Heart left ventricle (tissue), 16 donors: ENCODE measurements at regions of chr12 and their contacts with region 1.

Region 1: DNA sequence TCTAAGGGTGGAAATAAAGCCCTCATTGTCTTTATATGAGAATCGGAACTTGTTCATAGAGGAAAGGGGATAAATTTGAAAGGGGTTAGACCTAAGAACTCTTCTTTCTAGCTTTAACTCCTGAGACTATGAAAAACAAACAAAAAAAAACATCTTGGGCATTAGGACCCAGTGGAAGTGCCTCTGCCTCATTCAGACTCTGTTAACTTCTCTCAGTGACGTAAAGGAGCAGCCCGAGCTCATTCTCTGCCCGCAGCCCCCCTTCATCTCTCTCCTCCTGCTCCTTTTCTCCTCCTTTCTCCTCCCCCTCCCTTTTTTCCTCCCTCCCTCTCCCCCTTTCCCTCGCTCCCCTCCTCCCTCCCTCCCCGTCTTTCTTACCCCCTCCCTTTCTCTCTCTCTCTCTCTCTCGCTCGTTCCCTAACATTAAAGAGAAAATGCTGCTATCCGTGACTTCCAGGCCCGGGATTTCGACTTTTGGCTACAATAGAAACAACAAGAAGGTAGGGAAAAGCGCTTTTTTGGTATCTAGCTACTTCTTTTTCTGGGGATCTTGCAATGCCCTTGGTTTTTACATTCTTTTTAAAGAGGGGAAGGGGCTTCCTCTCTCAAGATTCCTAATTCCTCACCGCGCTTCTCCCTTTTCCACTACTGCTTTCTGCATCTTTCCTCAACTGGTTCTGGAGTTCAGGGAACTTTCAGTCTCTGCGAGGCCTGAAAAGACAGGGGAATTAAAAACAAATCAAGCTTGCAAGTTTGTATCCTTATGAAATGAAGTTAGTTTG is at the start of gene RBMS2:
- DNase-seq: peak; percentile 71 to 88 (median 87)
- ATAC-seq: peak; percentile 93 to 98 (median 95)
- H3K4me3 ChIP-seq: peak within 1 kb of the TSS; percentile 31 to 83 (median 67)
- H3K27ac ChIP-seq: peak within 1 kb of the TSS; percentile 85 to 97 (median 92)
- H3K4me1 ChIP-seq: peaks cover 0 to 73% (median 41%) of the 10 kb centered on the region in 12 donors
- H3K27me3 ChIP-seq: no peaks in the 10 kb centered on the region
- CTCF ChIP-seq: no peak
- POLR2A ChIP-seq: peak in 1 of 2 donors; percentile 33
- total RNA-seq, gene RBMS2: 15.8 to 37.3 (median 30.1) TPM

Region 2: DNA sequence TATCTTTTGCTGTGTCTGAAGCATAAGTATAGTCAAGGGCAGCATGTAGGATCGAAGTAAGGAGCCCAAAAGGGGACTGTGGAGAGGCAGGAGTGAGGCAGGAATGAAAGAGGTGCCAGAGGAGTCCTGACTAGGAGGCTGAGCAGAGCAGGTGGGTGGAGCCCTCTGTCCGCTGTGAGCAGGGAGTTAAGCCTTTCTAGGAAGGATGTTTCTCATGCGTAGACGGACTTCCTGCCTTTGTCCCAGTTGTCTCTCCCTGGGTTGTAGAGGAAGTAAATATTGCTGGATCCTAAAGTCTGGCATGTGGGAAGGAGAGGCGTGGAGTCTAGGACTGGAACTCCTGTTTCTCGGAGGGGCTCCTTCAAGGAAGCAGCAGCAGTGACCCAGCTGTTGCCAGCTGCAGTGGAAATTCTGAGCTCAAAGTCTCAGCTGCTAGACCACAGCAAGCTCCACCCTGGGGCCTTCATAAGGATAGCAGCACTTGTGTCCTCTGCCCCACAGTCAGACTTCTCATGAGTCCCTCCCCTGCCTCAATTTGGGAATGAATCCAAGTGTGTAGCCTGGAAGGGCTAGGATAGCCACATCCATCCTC is 43.8 kb after region 1 on chr12:
- intact Hi-C with region 1: loop called in 5 of 10 experiments (anchors 1 to 5 kb)
- DNase-seq: peak; percentile 80 to 91 (median 91)
- ATAC-seq: peak; percentile 91 to 97 (median 95)
- H3K4me3 ChIP-seq: peak overlapping the region in 4 of 12 donors; percentile 4 to 21 (median 9)
- H3K27ac ChIP-seq: peak overlapping the region; percentile 49 to 93 (median 84)
- H3K4me1 ChIP-seq: peaks cover 4 to 59% (median 38%) of the 10 kb centered on the region in 12 donors
- H3K27me3 ChIP-seq: no peaks in the 10 kb centered on the region
- CTCF ChIP-seq: peak in 6 of 12 donors; percentile 9 to 31 (median 18)
- POLR2A ChIP-seq: peak in 1 of 2 donors; percentile 39

Region 3: DNA sequence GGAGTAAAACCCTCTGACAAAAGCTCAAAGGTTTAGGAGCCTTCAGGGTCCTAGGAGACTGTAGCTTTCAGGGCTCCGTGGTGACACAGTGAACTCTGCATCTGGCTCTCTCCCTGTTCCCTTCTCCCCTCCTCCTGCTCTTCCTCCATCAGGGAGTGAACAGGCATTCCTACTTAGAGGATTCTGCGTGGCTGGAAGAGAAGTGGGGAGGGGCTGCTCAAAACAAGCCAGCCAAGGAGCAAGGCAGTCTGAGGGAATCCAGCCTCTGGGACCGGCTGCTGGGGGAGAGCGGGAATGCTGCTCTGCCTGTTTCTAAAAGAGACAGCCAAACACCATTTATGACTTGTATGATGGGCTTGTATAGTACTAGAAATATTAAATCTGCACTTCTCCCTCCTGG is 49.3 kb after region 1 on chr12:
- intact Hi-C with region 1: loop called in 4 of 10 experiments (anchors 2 to 5 kb)
- DNase-seq: peak in 1 of 5 donors; percentile 20
- ATAC-seq: peak in 3 of 4 donors; percentile 29 to 43 (median 31)
- H3K4me3 ChIP-seq: no peak overlapping the region
- H3K27ac ChIP-seq: peak overlapping the region; percentile 4 to 93 (median 54)
- H3K4me1 ChIP-seq: peaks cover 4 to 55% (median 31%) of the 10 kb centered on the region in 12 donors
- H3K27me3 ChIP-seq: no peaks in the 10 kb centered on the region
- CTCF ChIP-seq: no peak
- POLR2A ChIP-seq: no peak

Region 4: GRCh38 chr12:56593909-56594621 is 72.3 kb after region 1 on chr12:
- intact Hi-C with region 1: loop called in 1 of 10 experiments (anchors 5 kb)
- DNase-seq: peak in 1 of 5 donors; percentile 42
- ATAC-seq: peak; percentile 48 to 79 (median 66)
- H3K4me3 ChIP-seq: no peak overlapping the region
- H3K27ac ChIP-seq: peak overlapping the region in 10 of 12 donors; percentile 10 to 59 (median 30)
- H3K4me1 ChIP-seq: peaks cover 0 to 23% (median 7%) of the 10 kb centered on the region in 12 donors
- H3K27me3 ChIP-seq: no peaks in the 10 kb centered on the region
- CTCF ChIP-seq: peak; percentile 58 to 79 (median 72)
- POLR2A ChIP-seq: no peak

Region 5: DNA sequence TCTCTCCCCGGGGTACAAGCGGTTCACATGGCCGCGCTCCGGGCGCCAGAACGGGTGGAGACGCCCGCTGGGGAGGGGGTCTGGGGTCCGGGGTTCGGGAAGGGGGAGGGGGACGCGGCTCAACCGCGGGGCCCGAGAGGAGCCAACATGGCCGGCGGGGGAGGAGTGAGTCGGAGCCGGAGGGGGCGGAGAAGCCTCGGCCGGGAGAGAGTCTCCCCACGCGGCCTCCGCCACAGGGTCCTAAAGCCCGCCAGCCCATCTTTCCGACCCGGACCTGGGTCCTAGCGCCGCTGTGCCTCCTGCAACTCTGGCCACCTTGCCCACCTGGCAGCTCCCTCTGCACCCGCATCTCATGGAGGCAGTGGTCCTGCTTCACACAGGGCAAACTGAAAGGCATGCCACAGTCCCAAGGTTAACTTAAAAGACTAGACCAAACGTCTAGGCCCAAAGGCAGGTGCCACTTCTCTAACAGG is 108.4 kb after region 1 on chr12 and contains the start of gene BAZ2A:
- intact Hi-C with region 1: loop called in 7 of 10 experiments (anchors 2 to 5 kb)
- DNase-seq: peak; percentile 91 to 93 (median 93)
- ATAC-seq: peak; percentile 79 to 90 (median 87)
- H3K4me3 ChIP-seq: peak within 1 kb of the TSS; percentile 80 to 100 (median 98)
- H3K27ac ChIP-seq: peak within 1 kb of the TSS; percentile 84 to 98 (median 94)
- H3K4me1 ChIP-seq: peaks cover 18 to 78% (median 63%) of the 10 kb centered on the region in 12 donors
- H3K27me3 ChIP-seq: no peaks in the 10 kb centered on the region
- CTCF ChIP-seq: no peak
- POLR2A ChIP-seq: no peak
- total RNA-seq, gene BAZ2A: 28.0 to 71.5 (median 44.5) TPM

Region 6: DNA sequence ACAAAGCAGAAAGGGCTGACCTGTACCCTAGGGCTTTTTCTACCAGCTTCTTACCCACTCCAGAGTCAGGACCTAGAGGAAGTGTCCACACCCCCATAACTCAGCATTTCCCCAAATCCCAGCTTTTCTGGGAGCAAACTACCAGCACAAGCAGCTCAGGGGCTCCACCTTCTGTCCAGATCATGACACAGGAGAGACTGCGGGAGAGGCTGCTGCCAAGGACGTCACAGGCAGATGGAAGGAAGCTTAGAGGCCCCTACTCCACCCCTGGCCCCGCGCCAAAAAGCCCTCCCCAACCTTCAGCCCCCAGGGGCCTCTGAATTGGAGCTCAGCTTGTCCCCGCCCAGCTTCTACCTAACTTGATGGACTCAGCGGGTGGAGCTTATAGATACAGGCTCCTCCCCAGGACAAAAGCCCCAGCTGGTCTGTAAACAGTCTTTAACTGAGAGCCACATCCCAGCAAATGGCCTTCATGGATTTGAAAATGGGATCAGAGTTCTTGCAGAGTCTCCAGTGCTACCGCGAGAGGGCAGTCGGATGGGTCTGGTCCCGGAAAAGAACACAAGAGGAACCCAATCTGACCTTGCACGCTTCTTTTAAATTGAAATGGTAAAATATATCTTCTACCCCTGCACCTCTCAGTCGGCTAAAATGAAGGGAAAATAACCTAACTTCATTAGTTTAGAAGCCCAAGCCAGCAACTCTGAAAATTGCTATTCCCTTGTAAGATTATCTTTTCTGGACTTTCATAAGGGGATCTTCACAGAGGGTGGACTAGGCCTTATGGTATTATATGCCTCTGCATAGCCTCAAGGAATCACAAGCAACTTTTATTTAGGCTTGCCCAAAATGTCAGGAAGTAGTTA is 115.1 kb after region 1 on chr12:
- intact Hi-C with region 1: loop called in 7 of 10 experiments (anchors 2 to 5 kb)
- DNase-seq: peak; percentile 98 to 100 (median 99)
- ATAC-seq: peak; percentile 77 to 87 (median 84)
- H3K4me3 ChIP-seq: peak overlapping the region in 11 of 12 donors; percentile 60 to 87 (median 83)
- H3K27ac ChIP-seq: peak overlapping the region; percentile 83 to 98 (median 96)
- H3K4me1 ChIP-seq: peaks cover 13 to 82% (median 51%) of the 10 kb centered on the region in 12 donors
- H3K27me3 ChIP-seq: no peaks in the 10 kb centered on the region
- CTCF ChIP-seq: peak; percentile 48 to 82 (median 67)
- POLR2A ChIP-seq: peak in 1 of 2 donors; percentile 73

Region 7: GRCh38 chr12:56670836-56671235 is 149.1 kb after region 1 on chr12:
- intact Hi-C with region 1: no loop called
- DNase-seq: no peak
- ATAC-seq: no peak
- H3K4me3 ChIP-seq: no peak overlapping the region
- H3K27ac ChIP-seq: no peak overlapping the region
- H3K4me1 ChIP-seq: peaks cover 0 to 27% (median 6%) of the 10 kb centered on the region in 12 donors
- H3K27me3 ChIP-seq: no peaks in the 10 kb centered on the region
- CTCF ChIP-seq: no peak
- POLR2A ChIP-seq: no peak